HEK293 (cell line): ENCODE measurements at regions of chr19 and their contacts with region 1.

Region 1: DNA sequence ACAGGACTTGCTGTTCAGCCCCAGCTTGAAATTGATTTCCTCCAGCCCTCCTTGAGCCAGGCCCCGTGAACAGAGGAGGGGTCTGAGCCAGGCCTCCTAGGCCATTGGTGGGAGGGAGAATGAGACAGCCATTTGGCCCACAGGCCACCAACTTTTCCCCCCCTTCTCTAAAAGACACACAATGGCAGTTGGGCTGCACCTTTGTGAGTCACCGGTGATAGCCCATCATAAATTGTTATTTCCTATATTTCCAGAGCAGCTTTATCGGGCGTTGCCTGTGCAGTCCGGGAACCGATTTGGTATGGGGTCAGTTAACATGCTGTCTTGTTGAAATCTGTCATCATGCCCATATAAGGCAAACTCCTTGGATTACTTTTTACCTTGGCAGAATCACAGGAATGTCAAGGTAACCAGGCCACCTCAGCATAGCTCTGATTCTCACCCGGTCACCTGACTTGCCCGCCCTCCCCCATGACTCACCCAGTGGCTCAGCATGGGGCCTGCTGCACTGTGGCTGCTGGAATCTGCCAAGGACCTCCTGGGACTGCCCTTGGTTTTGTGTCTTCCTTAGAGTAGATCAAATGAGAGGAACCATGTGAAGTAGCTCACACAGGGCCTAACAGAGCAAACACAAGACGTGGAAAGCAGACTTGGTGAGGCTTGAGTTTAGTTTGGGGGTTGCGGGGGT is 36.1 kb downstream of the ACTN4 start:
- H3K4me3 ChIP-seq: no peak overlapping the region
- H3K27ac ChIP-seq: peak overlapping the region; percentile 98
- H3K4me1 ChIP-seq: peaks cover 41% of the 10 kb centered on the region
- CTCF ChIP-seq: no peak

Region 2: DNA sequence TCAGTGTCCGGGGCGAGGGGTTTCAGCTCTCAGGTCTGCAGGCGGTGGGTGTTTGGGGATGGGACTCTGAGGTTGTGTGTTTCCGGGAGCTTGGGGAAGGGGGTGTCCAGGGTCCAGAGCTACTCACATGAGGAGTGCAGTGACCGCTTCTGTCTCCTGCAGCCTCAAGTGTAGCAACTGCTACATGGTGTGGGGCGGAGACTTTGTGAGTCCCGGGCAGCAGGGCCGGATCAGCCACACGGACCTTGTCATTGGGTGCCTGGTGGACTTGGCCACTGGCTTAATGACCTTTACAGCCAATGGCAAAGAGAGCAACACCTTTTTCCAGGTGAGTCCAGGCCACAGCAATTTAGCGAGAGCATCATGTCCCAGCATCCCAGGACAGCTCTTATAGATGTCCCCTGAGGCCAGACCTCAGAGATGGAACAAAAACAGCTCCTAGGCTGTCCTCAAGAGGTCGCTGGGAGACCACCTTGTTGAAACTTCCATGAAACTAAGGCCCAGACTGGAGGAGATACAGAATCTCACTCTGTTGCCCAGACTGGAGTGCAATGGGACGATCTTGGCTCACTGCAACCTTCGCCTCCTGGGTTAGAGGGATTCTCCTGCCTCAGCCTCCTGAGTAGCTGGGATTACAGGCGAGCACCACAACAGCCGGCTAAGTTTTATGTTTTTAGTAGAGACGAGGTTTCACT is 205.1 kb before region 1 on chr19:
- CTCF ChIA-PET with region 1: no interaction called
- POLR2A ChIA-PET with region 1: no interaction called
- H3K4me3 ChIP-seq: no peak overlapping the region
- H3K27ac ChIP-seq: no peak overlapping the region
- H3K4me1 ChIP-seq: no peaks in the 10 kb centered on the region
- CTCF ChIP-seq: peak; percentile 77

Region 3: GRCh38 chr19:38658462-38659306 is 24.9 kb before region 1 on chr19:
- CTCF ChIA-PET with region 1: interaction called, 4 read pairs
- POLR2A ChIA-PET with region 1: interaction called, 19 read pairs
- H3K4me3 ChIP-seq: no peak overlapping the region
- H3K27ac ChIP-seq: peak overlapping the region; percentile 70
- H3K4me1 ChIP-seq: peaks cover 70% of the 10 kb centered on the region
- CTCF ChIP-seq: no peak

Region 4: GRCh38 chr19:38666663-38667511 is 16.6 kb before region 1 on chr19:
- CTCF ChIA-PET with region 1: interaction called, 12 read pairs
- POLR2A ChIA-PET with region 1: interaction called, 16 read pairs
- H3K4me3 ChIP-seq: no peak overlapping the region
- H3K27ac ChIP-seq: peak overlapping the region; percentile 68
- H3K4me1 ChIP-seq: peaks cover 80% of the 10 kb centered on the region
- CTCF ChIP-seq: no peak